Cardiac septum (tissue), 1 donor: ENCODE measurements at regions of chr10 and their contacts with region 1.

Region 1: DNA sequence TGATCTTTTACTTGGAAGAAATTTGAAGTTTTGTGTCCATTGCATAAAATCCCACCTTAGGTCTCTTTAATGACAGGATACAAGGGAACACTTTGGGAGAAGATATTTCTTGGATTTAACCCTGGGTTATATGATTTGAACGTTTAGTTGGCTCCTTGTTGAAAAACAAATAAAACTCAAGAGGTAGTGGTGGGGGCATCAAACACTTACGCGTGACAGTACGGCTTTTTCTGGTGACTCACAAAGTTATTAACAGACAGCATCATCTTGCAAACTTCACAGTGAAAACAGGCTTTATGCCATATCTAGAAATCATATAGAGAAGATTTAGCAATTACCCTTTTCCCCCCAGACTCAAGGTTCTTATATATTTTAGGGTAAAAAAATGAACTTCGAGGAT is 699 bp downstream of the NRAP start:
- DNase-seq: no peak

Region 2: GRCh38 chr10:113563306-113564088 is 99.6 kb before region 1 on chr10:
- intact Hi-C with region 1: no loop called
- DNase-seq: peak; percentile 85

Region 3: DNA sequence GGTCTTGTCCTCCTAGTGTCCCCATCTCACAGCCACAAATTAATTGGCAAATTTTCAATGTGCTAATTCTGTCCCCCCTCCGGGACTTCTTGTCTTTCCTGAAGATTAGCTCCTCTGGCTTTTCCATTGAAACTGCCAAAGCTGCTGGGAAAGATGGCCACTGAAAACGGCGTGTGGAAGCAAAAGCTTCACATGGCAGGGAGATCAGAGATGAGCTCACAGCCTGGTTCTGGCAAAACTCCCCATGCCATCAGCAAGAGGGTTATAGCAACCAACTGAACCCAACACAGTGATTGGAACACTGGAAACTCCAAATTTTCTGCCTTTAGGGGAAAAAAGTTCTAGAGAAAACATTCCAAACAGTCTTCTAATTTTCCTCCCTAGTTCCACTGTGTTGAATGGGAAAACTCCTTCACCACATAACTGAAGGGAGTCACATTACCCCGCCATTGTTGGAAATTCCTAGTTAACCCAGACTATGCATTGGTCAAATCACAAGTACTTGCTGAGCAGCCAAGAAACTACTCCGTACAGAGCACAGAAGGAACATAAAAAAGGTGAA is 36.3 kb before region 1 on chr10:
- intact Hi-C with region 1: loop called (anchors 5 kb)
- DNase-seq: no peak

Region 4: GRCh38 chr10:113646336-113647201 is 16.6 kb before region 1 on chr10:
- intact Hi-C with region 1: loop called (anchors 2 kb)
- DNase-seq: no peak